ENCODE measurements at regions of chr13 and their contacts with region 1.

Region 1: DNA sequence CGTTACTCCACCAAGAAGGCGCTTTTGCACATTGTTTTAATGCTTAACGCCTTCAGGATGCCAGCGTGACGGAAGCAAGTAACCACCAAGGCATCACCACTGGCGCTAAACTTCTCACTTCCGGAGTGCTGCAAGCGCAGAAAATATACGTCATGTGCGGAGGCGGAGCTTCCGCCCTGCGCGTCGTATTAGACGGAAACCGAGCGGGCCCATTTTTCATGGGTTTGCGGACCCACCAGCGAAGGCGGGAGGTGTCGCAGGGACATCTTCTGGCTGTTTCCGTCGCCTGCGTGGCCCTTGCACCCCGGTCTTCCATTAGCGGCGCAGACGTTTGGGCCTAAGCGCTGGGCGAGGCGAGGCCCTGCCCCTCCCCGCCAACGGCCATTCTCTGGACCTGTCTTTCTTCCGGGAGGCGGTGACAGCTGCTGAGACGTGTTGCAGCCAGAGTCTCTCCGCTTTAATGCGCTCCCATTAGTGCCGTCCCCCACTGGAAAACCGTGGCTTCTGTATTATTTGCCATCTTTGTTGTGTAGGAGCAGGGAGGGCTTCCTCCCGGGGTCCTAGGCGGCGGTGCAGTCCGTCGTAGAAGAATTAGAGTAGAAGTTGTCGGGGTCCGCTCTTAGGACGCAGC is at the start of gene ERCC5:
- DNase-seq: peak; percentile 88 to 97 (median 97)
- H3K4me3 ChIP-seq: peak within 1 kb of the TSS; percentile 97
- H3K4me3 Mint-ChIP-seq: peak within 1 kb of the TSS; percentile 91 to 99 (median 97)
- H3K27ac ChIP-seq: peak within 1 kb of the TSS; percentile 99
- H3K27ac Mint-ChIP-seq: peak within 1 kb of the TSS; percentile 93 to 100 (median 99)
- H3K4me1 ChIP-seq: peaks cover 42% of the 10 kb centered on the region
- H3K4me1 Mint-ChIP-seq: peaks cover 42 to 52% (median 51%) of the 10 kb centered on the region in 3 donors
- H3K27me3 ChIP-seq: no peaks in the 10 kb centered on the region
- H3K27me3 Mint-ChIP-seq: peaks cover 0 to 5% of the 10 kb centered on the region in 2 donors
- total RNA-seq, gene ERCC5: 48.0 to 48.8 TPM

Region 2: DNA sequence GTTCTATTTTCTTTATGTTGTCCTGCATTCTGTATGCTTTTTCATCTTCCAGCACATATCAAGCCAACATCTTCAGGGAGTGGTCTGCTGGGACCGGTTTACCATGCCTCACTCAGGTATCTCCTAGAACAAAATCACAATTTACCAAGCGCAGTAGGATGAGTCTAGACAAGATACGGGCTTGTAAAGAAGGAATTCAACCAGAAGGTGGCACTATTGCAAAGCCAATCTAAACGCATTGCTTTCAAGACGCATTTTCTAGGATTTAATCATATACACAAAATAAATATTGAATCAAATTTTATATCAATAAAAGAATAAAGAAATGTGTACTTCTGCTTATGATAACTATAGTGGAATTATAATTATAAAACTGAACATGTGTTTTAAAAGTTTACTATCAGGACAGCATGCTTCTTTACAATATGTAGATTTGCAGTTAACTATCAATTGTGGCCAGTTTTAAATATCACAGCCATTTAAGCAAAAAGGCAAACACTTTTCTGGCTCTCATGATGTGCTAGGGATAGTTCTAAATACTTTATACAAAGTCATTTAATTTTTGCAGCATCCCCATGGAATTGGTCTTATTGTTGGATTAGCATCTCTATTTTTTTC is 265.1 kb before region 1 on chr13:
- CTCF ChIA-PET with region 1: interaction called, 12 read pairs
- POLR2A ChIA-PET with region 1: interaction called, 5 read pairs
- DNase-seq: peak in 2 of 5 donors; percentile 44 to 54
- H3K4me3 ChIP-seq: no peak overlapping the region
- H3K4me3 Mint-ChIP-seq: no peak overlapping the region
- H3K27ac ChIP-seq: no peak overlapping the region
- H3K27ac Mint-ChIP-seq: peak overlapping the region in 1 of 8 donors; percentile 32
- H3K4me1 ChIP-seq: peaks cover 8% of the 10 kb centered on the region
- H3K4me1 Mint-ChIP-seq: peaks cover 13 to 17% (median 16%) of the 10 kb centered on the region in 3 donors
- H3K27me3 ChIP-seq: no peaks in the 10 kb centered on the region
- H3K27me3 Mint-ChIP-seq: peaks cover 13 to 19% of the 10 kb centered on the region in 2 donors

Region 3: DNA sequence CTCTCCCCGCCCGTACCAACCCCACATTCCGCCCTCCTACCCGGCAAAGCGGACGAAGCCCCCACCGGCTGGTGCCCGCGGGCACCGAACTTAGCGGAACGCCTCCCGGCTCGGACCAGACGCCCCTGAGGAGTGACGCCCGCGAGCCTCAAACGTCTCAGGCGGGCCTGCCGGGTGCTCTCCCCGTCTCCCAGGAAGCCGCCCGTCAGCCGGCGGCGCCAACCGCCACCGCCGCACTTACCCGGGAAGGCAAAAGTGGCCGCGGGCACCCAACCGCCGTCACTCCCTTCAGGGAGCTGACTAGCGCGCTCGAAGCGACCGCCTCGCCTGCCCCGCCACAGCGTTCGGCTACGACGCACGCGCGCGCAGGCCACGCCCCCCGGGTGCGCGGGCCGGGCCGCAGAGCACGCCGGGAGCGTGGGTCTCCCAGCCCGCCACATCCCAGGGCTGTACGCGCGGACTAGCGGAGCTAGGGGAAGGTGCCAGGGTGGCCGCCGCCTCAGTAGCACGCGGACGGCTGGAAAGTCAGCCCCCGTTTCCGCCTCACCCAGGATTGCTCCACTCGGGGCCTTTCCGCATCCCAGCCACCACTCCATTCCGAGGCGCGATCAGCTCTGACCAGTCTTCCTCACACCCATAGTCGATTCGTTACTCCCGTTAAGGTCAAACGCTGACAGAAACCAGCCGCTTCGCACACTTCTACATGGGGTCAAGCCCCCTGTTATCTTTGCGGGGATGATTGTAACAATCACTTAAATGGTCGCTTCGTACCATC is 72.1 kb before region 1 on chr13 and contains the start of gene TEX30:
- CTCF ChIA-PET with region 1: interaction called, 6 read pairs
- POLR2A ChIA-PET with region 1: interaction called, 28 read pairs
- DNase-seq: peak; percentile 80 to 91 (median 90)
- H3K4me3 ChIP-seq: peak within 1 kb of the TSS; percentile 87
- H3K4me3 Mint-ChIP-seq: peak within 1 kb of the TSS; percentile 88 to 96 (median 92)
- H3K27ac ChIP-seq: peak within 1 kb of the TSS; percentile 77
- H3K27ac Mint-ChIP-seq: peak within 1 kb of the TSS; percentile 65 to 98 (median 95)
- H3K4me1 ChIP-seq: peaks cover 5% of the 10 kb centered on the region
- H3K4me1 Mint-ChIP-seq: peaks cover 35 to 52% (median 49%) of the 10 kb centered on the region in 3 donors
- H3K27me3 ChIP-seq: no peaks in the 10 kb centered on the region
- H3K27me3 Mint-ChIP-seq: peaks cover 0 to 3% of the 10 kb centered on the region in 2 donors
- total RNA-seq, gene TEX30: 58.5 to 64.3 TPM

Region 4: GRCh38 chr13:102800145-102801041 is 45.4 kb before region 1 on chr13:
- CTCF ChIA-PET with region 1: interaction called, 20 read pairs
- POLR2A ChIA-PET with region 1: interaction called, 17 read pairs
- DNase-seq: peak; percentile 73 to 88 (median 80)
- H3K4me3 ChIP-seq: peak overlapping the region; percentile 67
- H3K4me3 Mint-ChIP-seq: peak overlapping the region; percentile 89 to 98 (median 96)
- H3K27ac ChIP-seq: peak overlapping the region; percentile 61
- H3K27ac Mint-ChIP-seq: peak overlapping the region; percentile 59 to 95 (median 78)
- H3K4me1 ChIP-seq: peaks cover 6% of the 10 kb centered on the region
- H3K4me1 Mint-ChIP-seq: peaks cover 28 to 49% (median 45%) of the 10 kb centered on the region in 3 donors
- H3K27me3 ChIP-seq: no peaks in the 10 kb centered on the region
- H3K27me3 Mint-ChIP-seq: peaks cover 0 to 4% of the 10 kb centered on the region in 2 donors